Activated B cell treated with CpG ODN at 0.5 μM for 24 hours (primary cell): ENCODE measurements at regions of chr10 and their contacts with region 1.

Region 1: DNA sequence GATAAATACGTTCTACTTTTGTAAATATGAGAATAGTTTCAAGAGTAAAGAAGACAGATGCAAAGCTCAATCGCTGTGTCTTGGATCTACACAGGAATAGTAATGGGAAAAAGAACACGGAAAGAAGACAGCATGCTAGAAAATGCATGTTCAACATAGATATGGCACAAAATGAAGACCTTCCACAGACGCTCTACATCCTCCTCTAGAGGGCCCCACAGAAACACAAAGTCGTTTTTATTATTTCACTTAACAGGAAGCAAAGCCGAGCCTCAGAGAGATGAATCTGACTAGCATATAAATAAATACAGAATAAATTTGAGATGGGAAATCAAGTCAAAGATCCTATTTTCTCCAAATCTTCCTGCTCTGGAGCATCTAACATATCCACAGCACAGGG is 292.6 kb downstream of the PARD3 start:
- DNase-seq: no peak
- ATAC-seq: no peak
- H3K4me3 Mint-ChIP-seq: no peak overlapping the region
- H3K27ac Mint-ChIP-seq: no peak overlapping the region
- H3K4me1 Mint-ChIP-seq: no peaks in the 10 kb centered on the region
- H3K27me3 Mint-ChIP-seq: no peaks in the 10 kb centered on the region
- CTCF ChIP-seq: no peak

Region 2: GRCh38 chr10:34135515-34135914 is 387.0 kb before region 1 on chr10:
- CTCF ChIA-PET with region 1: no interaction called
- POLR2A ChIA-PET with region 1: no interaction called
- intact Hi-C with region 1: no loop called
- DNase-seq: no peak
- ATAC-seq: no peak
- H3K4me3 Mint-ChIP-seq: no peak overlapping the region
- H3K27ac Mint-ChIP-seq: no peak overlapping the region
- H3K4me1 Mint-ChIP-seq: no peaks in the 10 kb centered on the region
- H3K27me3 Mint-ChIP-seq: no peaks in the 10 kb centered on the region
- CTCF ChIP-seq: no peak

Region 3: GRCh38 chr10:34637418-34637911 is 114.9 kb after region 1 on chr10:
- CTCF ChIA-PET with region 1: no interaction called
- POLR2A ChIA-PET with region 1: no interaction called
- intact Hi-C with region 1: loop called (anchors 1 kb)
- DNase-seq: peak; percentile 44
- ATAC-seq: peak; percentile 88
- H3K4me3 Mint-ChIP-seq: peak overlapping the region; percentile 21
- H3K27ac Mint-ChIP-seq: no peak overlapping the region
- H3K4me1 Mint-ChIP-seq: peaks cover 20% of the 10 kb centered on the region
- H3K27me3 Mint-ChIP-seq: peaks cover 3% of the 10 kb centered on the region
- CTCF ChIP-seq: peak; percentile 51

Region 4: DNA sequence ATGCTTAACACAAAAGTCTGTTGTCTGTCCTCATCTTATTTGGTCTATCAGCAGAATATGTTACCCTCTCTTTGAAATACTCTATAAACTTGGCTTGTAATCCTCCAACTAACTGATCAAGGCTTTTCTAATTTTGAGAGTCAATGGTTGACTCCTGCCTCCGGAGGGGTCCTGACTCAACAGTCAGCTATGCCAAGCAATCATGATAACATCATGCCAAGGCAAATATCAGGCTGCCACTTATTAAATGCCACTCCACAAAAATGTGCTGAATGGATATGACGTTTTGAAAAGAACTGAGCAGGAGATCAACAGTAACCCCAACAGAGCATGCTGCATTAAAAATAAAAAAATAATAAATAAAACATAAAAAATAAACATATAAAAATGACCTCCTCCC is 176.4 kb after region 1 on chr10:
- CTCF ChIA-PET with region 1: no interaction called
- POLR2A ChIA-PET with region 1: no interaction called
- intact Hi-C with region 1: no loop called
- DNase-seq: no peak
- ATAC-seq: no peak
- H3K4me3 Mint-ChIP-seq: no peak overlapping the region
- H3K27ac Mint-ChIP-seq: no peak overlapping the region
- H3K4me1 Mint-ChIP-seq: no peaks in the 10 kb centered on the region
- H3K27me3 Mint-ChIP-seq: no peaks in the 10 kb centered on the region
- CTCF ChIP-seq: no peak

Region 5: GRCh38 chr10:34835908-34836508 is 313.5 kb after region 1 on chr10:
- CTCF ChIA-PET with region 1: no interaction called
- POLR2A ChIA-PET with region 1: no interaction called
- intact Hi-C with region 1: no loop called
- DNase-seq: no peak
- ATAC-seq: no peak
- H3K4me3 Mint-ChIP-seq: no peak overlapping the region
- H3K27ac Mint-ChIP-seq: no peak overlapping the region
- H3K4me1 Mint-ChIP-seq: no peaks in the 10 kb centered on the region
- H3K27me3 Mint-ChIP-seq: no peaks in the 10 kb centered on the region
- CTCF ChIP-seq: no peak

Region 6: DNA sequence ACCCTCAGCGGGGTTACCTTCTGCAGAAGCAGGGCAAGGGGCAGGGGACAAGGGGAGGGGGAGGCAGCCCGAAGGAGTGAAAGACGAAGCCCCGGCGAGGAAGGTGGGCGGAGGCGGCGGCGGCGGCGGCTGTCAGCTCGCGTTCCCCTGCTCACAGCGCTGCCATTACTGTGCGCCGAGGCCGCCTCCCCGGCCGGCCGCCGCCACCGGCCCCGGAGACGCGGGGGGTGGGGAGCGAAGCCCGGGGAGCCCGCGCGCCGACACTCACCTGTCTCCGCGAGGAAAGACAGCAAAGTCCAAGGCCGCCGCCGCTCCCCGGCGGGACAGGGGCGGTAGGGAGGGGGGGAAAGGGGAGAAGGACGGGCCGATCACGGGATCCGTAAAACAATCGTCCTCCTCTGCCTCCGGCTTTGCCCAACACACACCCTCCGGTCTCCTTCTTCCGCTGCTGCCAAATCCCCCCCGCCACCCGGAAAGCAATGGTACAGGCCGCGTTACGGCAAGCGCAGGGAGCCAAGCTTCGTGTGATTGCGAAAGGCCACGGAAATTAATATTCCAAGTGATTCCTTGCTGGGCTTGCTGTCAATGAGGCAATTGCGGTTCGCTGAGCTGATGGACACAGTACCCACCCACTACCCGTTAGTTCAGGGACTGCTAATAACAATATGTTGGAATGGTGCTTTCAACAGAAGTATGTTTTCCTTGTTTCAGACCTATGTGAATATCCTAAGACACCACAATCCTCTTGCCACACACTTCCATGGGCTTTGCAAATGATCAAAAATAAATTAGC is 567.8 kb after region 1 on chr10 and contains the start of gene CUL2:
- CTCF ChIA-PET with region 1: no interaction called
- POLR2A ChIA-PET with region 1: no interaction called
- intact Hi-C with region 1: no loop called
- DNase-seq: peak; percentile 89
- ATAC-seq: peak; percentile 96
- H3K4me3 Mint-ChIP-seq: peak within 1 kb of the TSS; percentile 98
- H3K27ac Mint-ChIP-seq: peak within 1 kb of the TSS; percentile 98
- H3K4me1 Mint-ChIP-seq: peaks cover 52% of the 10 kb centered on the region
- H3K27me3 Mint-ChIP-seq: peaks cover under 1% of the 10 kb centered on the region
- CTCF ChIP-seq: no peak
- total RNA-seq, gene CUL2: 32.7 and 33.7 TPM in 2 replicates